ENCODE measurements at regions of chr5 and their contacts with region 1.

Region 1: GRCh38 chr5:110414360-110414759 is 312.1 kb downstream of the TMEM232 start:
- DNase-seq: no peak
- ATAC-seq: no peak

Region 2: DNA sequence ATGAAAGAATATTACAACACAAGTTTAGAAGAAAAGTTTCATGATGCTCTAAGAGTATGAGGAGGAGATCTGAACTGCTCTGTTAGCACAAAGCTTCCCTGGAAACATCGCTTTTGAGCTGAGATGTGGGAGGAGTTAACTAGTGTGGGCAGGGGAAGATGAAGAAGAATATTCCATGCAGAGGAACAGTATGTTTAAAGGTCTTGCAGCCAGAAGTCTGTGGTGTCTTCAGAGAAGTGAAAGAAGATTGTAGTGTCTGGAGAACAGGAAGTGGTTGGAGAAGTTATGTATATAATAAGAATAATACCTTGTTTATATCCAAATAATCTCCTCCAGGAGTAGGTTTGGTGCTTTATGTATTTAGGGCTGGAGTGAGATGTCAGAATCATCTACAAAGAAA is 317.9 kb before region 1 on chr5:
- intact Hi-C with region 1: loop called in 1 of 2 experiments (anchors 5 kb)
- DNase-seq: no peak
- ATAC-seq: no peak

Region 3: DNA sequence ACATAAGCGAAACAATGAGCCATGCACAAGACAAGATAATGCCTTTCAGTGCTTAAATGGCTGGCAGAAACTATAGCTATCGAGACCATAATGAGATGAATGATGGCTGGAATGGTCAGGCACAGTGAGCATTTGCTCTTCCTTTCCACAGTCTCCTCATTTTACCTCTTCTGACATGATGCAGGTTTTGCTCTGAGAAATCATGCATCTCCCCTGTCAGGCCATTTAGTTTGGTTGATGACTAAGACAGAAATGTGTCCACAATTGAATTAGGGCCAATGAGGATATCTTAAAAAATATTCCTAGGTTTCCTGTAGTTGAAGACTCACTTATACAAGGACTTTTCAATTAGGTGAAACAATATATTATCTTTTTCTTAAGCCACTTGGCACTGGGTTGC is 163.0 kb before region 1 on chr5:
- intact Hi-C with region 1: no loop called
- DNase-seq: no peak
- ATAC-seq: no peak

Measured in left cardiac atrium (tissue), 4 donors.